ENCODE measurements at regions of chr18 and their contacts with region 1.

Region 1: GRCh38 chr18:3472681-3473544 is 22.9 kb downstream of the TGIF1 start:
- DNase-seq: peak; percentile 41
- H3K4me3 Mint-ChIP-seq: peak overlapping the region; percentile 23
- H3K27ac Mint-ChIP-seq: peak overlapping the region; percentile 8
- H3K4me1 Mint-ChIP-seq: peaks cover 17% of the 10 kb centered on the region
- H3K27me3 Mint-ChIP-seq: peaks cover 5% of the 10 kb centered on the region

Region 2: GRCh38 chr18:3541549-3542386 is 68.9 kb after region 1 on chr18:
- CTCF ChIA-PET with region 1: no interaction called
- POLR2A ChIA-PET with region 1: no interaction called
- intact Hi-C with region 1: loop called (anchors 1 kb)
- DNase-seq: peak; percentile 68
- H3K4me3 Mint-ChIP-seq: peak overlapping the region; percentile 8
- H3K27ac Mint-ChIP-seq: peak overlapping the region; percentile 59
- H3K4me1 Mint-ChIP-seq: peaks cover 35% of the 10 kb centered on the region
- H3K27me3 Mint-ChIP-seq: no peaks in the 10 kb centered on the region